Ascending aorta (tissue), 2 donors: ENCODE measurements at regions of chr3 and their contacts with region 1.

Region 1: GRCh38 chr3:40452876-40453730 is 4.0 kb upstream of the RPL14 start:
- DNase-seq: peak; percentile 96 to 99
- H3K4me3 ChIP-seq: peak overlapping the region; percentile 61 to 68
- H3K27ac ChIP-seq: peak overlapping the region; percentile 83 to 89
- H3K4me1 ChIP-seq: peaks cover 0 to 15% of the 10 kb centered on the region in 2 donors
- H3K27me3 ChIP-seq: no peaks in the 10 kb centered on the region
- CTCF ChIP-seq: no peak

Region 2: DNA sequence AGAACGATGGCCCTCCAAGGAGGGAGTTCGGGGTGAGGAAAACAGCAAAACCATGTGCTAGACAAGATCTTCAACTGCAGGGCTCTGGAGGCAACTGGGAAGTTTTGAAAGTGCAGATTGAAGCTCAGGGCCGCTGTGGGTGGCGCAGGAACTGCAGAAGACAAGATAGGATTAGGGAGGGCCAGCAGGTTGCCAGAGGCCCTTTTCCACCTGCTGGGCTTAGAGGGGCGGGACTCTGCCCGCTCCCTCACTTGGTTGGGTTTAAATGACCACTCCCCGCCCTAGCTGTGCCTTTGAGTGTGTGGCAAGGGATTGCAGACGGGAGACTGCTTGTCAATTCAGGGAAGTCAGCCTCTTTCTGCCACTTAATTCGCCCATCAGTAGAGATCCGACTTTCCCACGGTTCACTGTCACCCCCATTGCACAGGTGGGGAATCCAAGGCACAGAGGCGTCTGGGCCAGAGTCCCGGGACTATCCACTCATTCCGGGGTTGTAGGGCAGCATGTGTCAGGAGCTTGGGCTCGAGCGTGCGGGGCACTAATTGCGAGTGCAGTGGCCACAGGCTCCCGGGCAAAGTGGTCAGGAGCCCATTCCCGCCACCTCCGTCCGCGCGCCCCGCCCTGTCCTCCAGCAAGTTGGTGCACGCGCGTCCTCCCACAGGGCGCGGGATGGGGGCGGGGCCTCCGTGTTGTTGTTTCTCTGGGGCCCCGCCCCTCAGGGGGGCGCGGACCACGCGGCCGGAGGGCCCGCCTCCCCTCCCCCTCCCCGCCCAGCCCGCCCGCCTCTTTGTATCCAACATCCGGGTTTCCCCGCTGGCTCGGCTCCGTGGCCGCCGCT is 1999.8 kb before region 1 on chr3 and contains the start of gene ACVR2B:
- intact Hi-C with region 1: loop called (anchors 5 kb)
- DNase-seq: peak; percentile 46 to 92
- H3K4me3 ChIP-seq: peak within 1 kb of the TSS; percentile 88 to 99
- H3K27ac ChIP-seq: peak within 1 kb of the TSS; percentile 45 to 61
- H3K4me1 ChIP-seq: peaks cover 0 to 9% of the 10 kb centered on the region in 2 donors
- H3K27me3 ChIP-seq: no peaks in the 10 kb centered on the region
- CTCF ChIP-seq: no peak
- total RNA-seq, gene ACVR2B: 15.2 TPM

Region 3: DNA sequence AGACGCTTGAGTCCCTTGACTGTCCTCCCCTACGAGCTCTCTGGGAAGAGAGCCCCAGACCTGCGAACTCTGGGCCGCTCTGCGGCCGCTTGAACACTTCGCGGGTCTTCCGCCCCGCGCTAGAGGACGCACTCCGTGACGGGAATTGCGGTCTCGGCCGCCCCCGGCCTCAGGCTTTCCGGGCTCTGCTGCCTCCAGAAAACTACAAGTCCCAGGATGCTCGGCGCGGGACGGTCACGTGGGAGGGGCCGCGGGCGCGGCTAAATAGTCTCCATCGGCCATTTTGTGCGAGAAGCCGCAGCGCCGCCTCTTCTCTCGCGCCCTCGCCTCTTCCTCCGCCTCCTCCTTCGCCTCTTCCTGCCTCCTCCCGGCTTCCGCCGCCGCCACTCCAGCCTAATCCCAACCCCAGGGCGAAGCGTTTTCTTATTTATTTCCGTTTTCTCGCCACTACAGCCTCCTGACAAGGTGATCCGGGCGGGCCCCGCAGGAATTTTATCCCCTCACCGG is 143.6 kb before region 1 on chr3 and contains the start of gene EIF1B:
- intact Hi-C with region 1: loop called (anchors 1 kb)
- DNase-seq: peak; percentile 92 to 99
- H3K4me3 ChIP-seq: peak within 1 kb of the TSS; percentile 74
- H3K27ac ChIP-seq: peak within 1 kb of the TSS; percentile 84 to 97
- H3K4me1 ChIP-seq: peaks cover 4 to 19% of the 10 kb centered on the region in 2 donors
- H3K27me3 ChIP-seq: no peaks in the 10 kb centered on the region
- CTCF ChIP-seq: peak; percentile 79 to 89 (median 88)
- total RNA-seq, gene EIF1B: 21.7 TPM

Region 4: GRCh38 chr3:40427045-40427669 is 25.9 kb before region 1 on chr3:
- intact Hi-C with region 1: no loop called
- DNase-seq: no peak
- H3K4me3 ChIP-seq: no peak overlapping the region
- H3K27ac ChIP-seq: no peak overlapping the region
- H3K4me1 ChIP-seq: no peaks in the 10 kb centered on the region
- H3K27me3 ChIP-seq: no peaks in the 10 kb centered on the region
- CTCF ChIP-seq: no peak

Region 5: DNA sequence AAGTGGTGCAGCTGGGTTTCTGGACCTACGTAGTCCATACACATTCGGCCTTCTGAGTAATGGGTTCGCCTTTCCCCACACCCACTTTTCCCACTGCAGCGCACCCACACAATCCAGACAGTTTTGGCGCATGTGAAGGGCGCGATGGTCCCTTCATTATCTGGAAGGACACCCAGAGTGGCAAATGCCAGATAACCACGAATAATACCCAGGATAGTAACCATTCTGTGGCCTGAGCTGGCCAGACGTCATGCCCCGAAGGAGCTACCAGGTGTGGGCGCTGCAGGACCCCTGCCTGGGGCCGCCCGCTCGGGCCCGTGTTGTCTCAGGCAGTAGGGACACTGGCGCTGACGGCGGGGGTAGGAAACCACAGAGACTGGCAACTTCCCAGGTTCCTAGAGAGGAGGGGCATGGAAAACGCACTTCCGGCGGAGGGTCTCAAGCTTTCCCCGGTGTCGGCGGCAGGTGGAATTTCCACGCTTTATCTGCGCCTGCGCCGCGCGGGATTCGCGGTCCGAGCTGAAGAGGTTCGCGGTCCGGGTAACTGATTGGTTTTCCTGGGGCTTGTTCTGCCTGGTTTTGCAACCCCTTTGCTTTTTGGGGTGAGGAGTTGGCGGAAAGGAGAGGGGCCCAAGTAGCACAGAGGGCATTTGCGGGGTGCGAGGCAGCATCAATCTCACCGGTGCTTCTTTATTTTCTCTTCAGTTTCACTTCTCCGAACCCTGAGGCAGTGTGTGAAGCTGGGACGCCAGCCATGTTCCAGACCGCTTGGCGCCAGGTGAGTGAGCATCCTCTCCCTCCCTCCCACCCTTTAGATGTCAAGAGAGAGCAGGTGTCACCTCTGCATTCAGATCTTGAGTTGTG is 52.7 kb after region 1 on chr3 and contains the start of gene ZNF620:
- intact Hi-C with region 1: loop called (anchors 1 kb)
- DNase-seq: peak; percentile 12 to 90
- H3K4me3 ChIP-seq: peak within 1 kb of the TSS; percentile 52 to 69
- H3K27ac ChIP-seq: peak within 1 kb of the TSS; percentile 77 to 82
- H3K4me1 ChIP-seq: peaks cover 5 to 10% of the 10 kb centered on the region in 2 donors
- H3K27me3 ChIP-seq: no peaks in the 10 kb centered on the region
- CTCF ChIP-seq: peak in 2 of 3 experiments; percentile 18 to 40
- total RNA-seq, gene ZNF620: not detected

Region 6: DNA sequence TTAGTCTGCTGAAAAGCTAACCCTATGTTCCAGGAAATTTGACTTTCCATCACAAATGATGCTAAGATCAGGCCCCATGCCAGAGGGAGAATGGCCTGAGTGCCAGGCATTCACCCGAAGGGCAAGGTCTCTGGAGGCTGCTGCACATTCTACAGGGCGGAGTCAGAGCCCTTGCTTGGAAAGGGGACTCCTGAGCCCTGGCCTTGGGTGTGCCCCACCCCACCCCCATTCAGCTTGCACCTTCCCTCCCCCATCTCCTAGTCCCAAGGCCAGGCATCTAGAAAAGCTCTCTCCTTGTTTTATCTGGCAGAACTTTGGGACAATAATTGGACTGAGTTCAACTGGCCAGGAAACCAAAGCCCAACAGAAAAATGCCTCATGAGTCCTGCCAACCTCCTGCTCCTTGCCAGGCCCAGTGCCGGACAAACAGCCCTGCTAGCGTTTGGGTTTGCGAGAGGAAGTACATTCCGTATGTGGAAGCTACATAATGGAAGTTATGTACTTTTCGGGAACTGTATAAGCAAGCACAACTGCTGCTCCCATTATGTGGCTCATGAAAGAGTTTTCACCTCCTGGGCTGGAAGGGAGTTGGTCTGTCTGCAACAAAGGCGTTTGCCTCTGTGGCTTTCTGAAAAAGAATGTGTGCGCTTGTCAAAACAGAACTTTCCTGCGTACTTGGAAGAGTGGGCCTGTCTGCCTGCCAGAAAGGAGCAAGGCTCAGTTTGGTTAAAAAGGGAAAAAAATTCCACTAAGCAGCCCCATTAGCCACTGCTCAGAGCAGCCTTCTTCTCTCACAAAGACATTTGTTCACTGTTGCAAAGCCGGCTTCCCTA is 424.7 kb after region 1 on chr3:
- intact Hi-C with region 1: loop called (anchors 10 kb)
- DNase-seq: peak; percentile 24 to 95
- H3K4me3 ChIP-seq: peak overlapping the region in 1 of 2 donors; percentile 34
- H3K27ac ChIP-seq: peak overlapping the region; percentile 49 to 82
- H3K4me1 ChIP-seq: peaks cover 0 to 20% of the 10 kb centered on the region in 2 donors
- H3K27me3 ChIP-seq: no peaks in the 10 kb centered on the region
- CTCF ChIP-seq: no peak

Region 7: DNA sequence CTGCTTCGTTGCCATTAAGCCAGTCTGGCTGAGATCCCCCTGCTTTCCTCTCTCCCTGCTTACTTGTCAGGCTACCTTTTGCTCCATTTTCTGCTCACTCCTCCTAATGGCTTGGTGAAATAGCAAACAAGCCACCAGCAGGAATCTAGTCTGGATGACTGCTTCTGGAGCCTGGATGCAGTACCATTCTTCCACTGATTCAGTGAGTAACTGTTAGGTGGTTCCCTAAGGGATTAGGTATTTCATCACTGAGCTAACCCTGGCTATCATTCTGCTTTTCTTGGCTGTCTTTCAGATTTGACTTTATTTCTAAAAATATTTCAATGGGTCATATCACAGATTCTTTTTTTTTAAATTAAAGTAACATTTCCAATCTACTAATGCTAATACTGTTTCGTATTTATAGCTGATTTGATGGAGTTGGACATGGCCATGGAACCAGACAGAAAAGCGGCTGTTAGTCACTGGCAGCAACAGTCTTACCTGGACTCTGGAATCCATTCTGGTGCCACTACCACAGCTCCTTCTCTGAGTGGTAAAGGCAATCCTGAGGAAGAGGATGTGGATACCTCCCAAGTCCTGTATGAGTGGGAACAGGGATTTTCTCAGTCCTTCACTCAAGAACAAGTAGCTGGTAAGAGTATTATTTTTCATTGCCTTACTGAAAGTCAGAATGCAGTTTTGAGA is 771.2 kb after region 1 on chr3:
- intact Hi-C with region 1: loop called (anchors 10 kb)
- DNase-seq: peak in 1 of 2 donors; percentile 78
- H3K4me3 ChIP-seq: no peak overlapping the region
- H3K27ac ChIP-seq: peak overlapping the region; percentile 50 to 80
- H3K4me1 ChIP-seq: peaks cover 0 to 53% of the 10 kb centered on the region in 2 donors
- H3K27me3 ChIP-seq: no peaks in the 10 kb centered on the region
- CTCF ChIP-seq: peak in 1 of 3 experiments; percentile 13

Region 8: DNA sequence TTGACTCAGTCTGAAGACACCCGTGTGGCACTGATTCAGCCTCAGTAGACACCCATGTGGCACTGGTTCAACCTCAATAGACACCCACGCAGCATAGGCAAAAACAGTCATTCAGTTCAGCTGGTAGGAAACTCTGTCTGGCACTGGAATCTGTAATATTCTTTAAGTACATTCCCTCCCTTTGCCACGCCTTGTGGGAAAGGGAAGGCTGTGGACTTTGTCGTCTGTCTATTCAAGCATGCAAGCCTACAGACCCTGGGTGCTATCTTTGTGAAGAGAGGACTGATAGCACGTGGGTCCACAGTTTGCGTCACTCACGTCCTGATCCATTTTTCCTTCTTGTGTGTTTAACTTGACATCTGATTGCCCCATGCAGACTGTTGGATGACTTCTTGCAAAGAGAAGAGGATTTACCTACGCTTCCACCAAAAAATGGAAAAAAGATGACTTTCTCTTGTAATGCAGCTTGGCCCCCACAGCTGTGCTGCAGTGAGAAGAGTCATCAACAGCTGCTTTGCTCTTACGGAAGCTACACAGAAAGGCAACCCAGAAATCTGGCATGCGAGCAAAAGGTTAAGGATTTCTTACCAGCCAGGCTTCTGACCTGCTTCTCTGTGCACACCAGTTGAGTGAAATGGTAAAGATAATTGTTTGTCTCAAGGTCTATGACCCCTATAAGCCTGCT is 1230.7 kb after region 1 on chr3:
- intact Hi-C with region 1: no loop called
- DNase-seq: no peak
- H3K4me3 ChIP-seq: no peak overlapping the region
- H3K27ac ChIP-seq: no peak overlapping the region
- H3K4me1 ChIP-seq: peaks cover 0 to 3% of the 10 kb centered on the region in 2 donors
- H3K27me3 ChIP-seq: no peaks in the 10 kb centered on the region
- CTCF ChIP-seq: no peak

Region 9: GRCh38 chr3:42012935-42013690 is 1560.0 kb after region 1 on chr3:
- intact Hi-C with region 1: loop called (anchors 5 kb)
- DNase-seq: peak in 1 of 2 donors; percentile 83
- H3K4me3 ChIP-seq: peak overlapping the region; percentile 64 to 82
- H3K27ac ChIP-seq: peak overlapping the region; percentile 74 to 83
- H3K4me1 ChIP-seq: peaks cover 0 to 11% of the 10 kb centered on the region in 2 donors
- H3K27me3 ChIP-seq: no peaks in the 10 kb centered on the region
- CTCF ChIP-seq: no peak